HEK293 (cell line): ENCODE measurements at regions of chr1 and their contacts with region 1.

Region 1: DNA sequence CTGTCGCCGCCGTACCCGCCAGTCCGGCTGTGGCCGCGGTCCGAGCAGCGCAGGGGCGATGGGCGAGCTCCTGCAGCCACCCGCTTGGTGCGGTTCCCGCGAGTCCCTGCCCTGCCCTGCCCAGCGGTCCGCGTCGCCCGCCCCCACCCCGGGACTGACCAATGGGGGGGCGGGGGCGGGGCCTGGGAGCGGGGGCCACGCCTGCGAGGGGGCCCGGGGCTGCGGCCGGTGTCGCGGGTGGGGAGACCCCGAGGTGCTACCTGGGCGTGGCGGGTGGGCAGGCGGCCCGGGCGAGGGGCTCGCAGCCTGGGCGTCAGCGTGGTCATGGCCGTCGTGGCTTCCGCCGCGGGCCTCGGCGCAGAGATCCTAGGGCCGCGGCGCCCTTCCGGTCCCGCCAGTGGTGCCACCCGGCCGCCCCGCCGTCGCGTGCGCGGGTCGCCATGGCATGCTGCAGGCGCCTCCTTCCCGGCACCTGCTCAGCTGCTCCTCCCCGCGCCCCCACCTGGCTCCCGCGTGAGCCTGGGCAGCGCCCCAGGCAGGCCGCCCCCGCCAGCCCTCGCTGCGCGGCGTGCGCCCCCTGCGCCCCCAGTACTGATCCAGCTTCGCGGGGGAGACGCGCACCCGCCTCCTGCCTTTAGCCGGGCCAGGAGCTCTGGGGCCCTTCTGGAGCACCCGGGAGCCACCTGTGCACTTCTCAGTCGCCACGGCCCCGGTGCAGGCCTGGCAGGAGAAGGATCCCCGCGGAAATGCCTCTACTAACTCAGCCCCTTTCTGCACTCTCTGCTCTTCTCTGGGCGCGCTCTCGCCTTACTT is at the start of gene BMP8B:
- H3K4me3 ChIP-seq: peak within 1 kb of the TSS; percentile 71
- H3K27ac ChIP-seq: peak within 1 kb of the TSS; percentile 25; the same call in 1 of the 2 replicates
- H3K4me1 ChIP-seq: no peaks in the 10 kb centered on the region
- CTCF ChIP-seq: peak; percentile 40; the same call in 1 of the 2 replicates

Region 2: GRCh38 chr1:39609618-39610331 is 179.2 kb before region 1 on chr1:
- CTCF ChIA-PET with region 1: no interaction called
- POLR2A ChIA-PET with region 1: no interaction called
- H3K4me3 ChIP-seq: no peak overlapping the region
- H3K27ac ChIP-seq: no peak overlapping the region
- H3K4me1 ChIP-seq: no peaks in the 10 kb centered on the region
- CTCF ChIP-seq: peak; percentile 81; the same call in 1 of the 2 replicates

Region 3: GRCh38 chr1:39745016-39745670 is 43.8 kb before region 1 on chr1:
- CTCF ChIA-PET with region 1: no interaction called
- POLR2A ChIA-PET with region 1: no interaction called
- H3K4me3 ChIP-seq: no peak overlapping the region
- H3K27ac ChIP-seq: no peak overlapping the region
- H3K4me1 ChIP-seq: no peaks in the 10 kb centered on the region
- CTCF ChIP-seq: no peak

Region 4: GRCh38 chr1:39799770-39800470 is 11.0 kb after region 1 on chr1:
- CTCF ChIA-PET with region 1: interaction called, 12 read pairs
- POLR2A ChIA-PET with region 1: interaction called, 6 read pairs
- H3K4me3 ChIP-seq: no peak overlapping the region
- H3K27ac ChIP-seq: no peak overlapping the region
- H3K4me1 ChIP-seq: no peaks in the 10 kb centered on the region
- CTCF ChIP-seq: peak; percentile 73